ENCODE measurements at regions of chr12 and their contacts with region 1.

Region 1: GRCh38 chr12:51980051-51980808 is 26.5 kb upstream of the TAMALIN start:
- DNase-seq: peak; percentile 39 to 76 (median 65)
- ATAC-seq: peak; percentile 99
- H3K4me3 ChIP-seq: no peak overlapping the region
- H3K4me3 Mint-ChIP-seq: peak overlapping the region in 3 of 10 donors; percentile 7 to 45 (median 32)
- H3K27ac ChIP-seq: no peak overlapping the region
- H3K27ac Mint-ChIP-seq: peak overlapping the region in 5 of 9 donors; percentile 25 to 74 (median 48)
- H3K4me1 ChIP-seq: peaks cover 5 to 10% of the 10 kb centered on the region in 2 donors
- H3K4me1 Mint-ChIP-seq: peaks cover 24 to 32% (median 28%) of the 10 kb centered on the region in 7 donors
- H3K27me3 ChIP-seq: no peaks in the 10 kb centered on the region
- H3K27me3 Mint-ChIP-seq: peaks cover 0 to 5% (median 0%) of the 10 kb centered on the region in 5 donors

Region 2: GRCh38 chr12:51759175-51759574 is 221.1 kb before region 1 on chr12:
- CTCF ChIA-PET with region 1: no interaction called
- POLR2A ChIA-PET with region 1: no interaction called
- intact Hi-C with region 1: no loop called
- DNase-seq: no peak
- ATAC-seq: no peak
- H3K4me3 ChIP-seq: no peak overlapping the region
- H3K4me3 Mint-ChIP-seq: no peak overlapping the region
- H3K27ac ChIP-seq: no peak overlapping the region
- H3K27ac Mint-ChIP-seq: no peak overlapping the region
- H3K4me1 ChIP-seq: no peaks in the 10 kb centered on the region
- H3K4me1 Mint-ChIP-seq: no peaks in the 10 kb centered on the region
- H3K27me3 ChIP-seq: no peaks in the 10 kb centered on the region
- H3K27me3 Mint-ChIP-seq: peaks cover 4 to 16% (median 10%) of the 10 kb centered on the region in 5 donors

Region 3: DNA sequence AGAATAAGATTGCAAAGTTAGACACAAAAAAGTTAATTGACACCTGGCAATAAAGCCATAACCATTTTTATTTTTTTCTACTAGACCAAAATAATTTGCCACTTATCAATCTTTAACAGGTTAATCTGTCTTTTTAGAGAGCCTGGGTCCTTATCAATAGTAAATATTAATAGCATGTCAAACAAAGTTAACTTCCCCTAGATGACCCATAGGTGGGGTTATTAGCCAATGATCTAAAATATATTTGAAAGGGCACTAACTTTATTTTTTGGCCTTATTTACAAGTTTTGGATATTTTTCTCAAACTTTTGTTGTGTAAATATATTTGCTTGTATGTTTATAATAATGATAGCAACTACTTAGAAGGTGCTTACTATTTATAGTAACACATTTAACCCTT is 88.4 kb before region 1 on chr12:
- CTCF ChIA-PET with region 1: no interaction called
- POLR2A ChIA-PET with region 1: no interaction called
- intact Hi-C with region 1: loop called in 1 of 2 experiments (anchors 1 kb)
- DNase-seq: no peak
- ATAC-seq: no peak
- H3K4me3 ChIP-seq: no peak overlapping the region
- H3K4me3 Mint-ChIP-seq: no peak overlapping the region
- H3K27ac ChIP-seq: no peak overlapping the region
- H3K27ac Mint-ChIP-seq: no peak overlapping the region
- H3K4me1 ChIP-seq: no peaks in the 10 kb centered on the region
- H3K4me1 Mint-ChIP-seq: peaks cover 0 to under 1% (median 0%) of the 10 kb centered on the region in 7 donors
- H3K27me3 ChIP-seq: peaks cover 0 to 3% of the 10 kb centered on the region in 2 donors
- H3K27me3 Mint-ChIP-seq: peaks cover 0 to 6% (median 0%) of the 10 kb centered on the region in 5 donors

Region 4: GRCh38 chr12:51937926-51938325 is 42.3 kb before region 1 on chr12:
- CTCF ChIA-PET with region 1: no interaction called
- POLR2A ChIA-PET with region 1: no interaction called
- intact Hi-C with region 1: no loop called
- DNase-seq: no peak
- ATAC-seq: no peak
- H3K4me3 ChIP-seq: no peak overlapping the region
- H3K4me3 Mint-ChIP-seq: no peak overlapping the region
- H3K27ac ChIP-seq: no peak overlapping the region
- H3K27ac Mint-ChIP-seq: no peak overlapping the region
- H3K4me1 ChIP-seq: no peaks in the 10 kb centered on the region
- H3K4me1 Mint-ChIP-seq: peaks cover 4 to 15% (median 6%) of the 10 kb centered on the region in 7 donors
- H3K27me3 ChIP-seq: no peaks in the 10 kb centered on the region
- H3K27me3 Mint-ChIP-seq: peaks cover 0 to 31% (median 0%) of the 10 kb centered on the region in 5 donors

Measured in naive thymus-derived CD4-positive, alpha-beta T cell (primary cell).